ENCODE measurements at regions of chr5 and their contacts with region 1.

Region 1: GRCh38 chr5:149618581-149619251 is 37.4 kb downstream of the ARHGEF37 start:
- DNase-seq: peak; percentile 76

Region 2: GRCh38 chr5:149448831-149449714 is 169.6 kb before region 1 on chr5:
- CTCF ChIA-PET with region 1: interaction called, 10 read pairs
- POLR2A ChIA-PET with region 1: no interaction called
- DNase-seq: no peak

Region 3: DNA sequence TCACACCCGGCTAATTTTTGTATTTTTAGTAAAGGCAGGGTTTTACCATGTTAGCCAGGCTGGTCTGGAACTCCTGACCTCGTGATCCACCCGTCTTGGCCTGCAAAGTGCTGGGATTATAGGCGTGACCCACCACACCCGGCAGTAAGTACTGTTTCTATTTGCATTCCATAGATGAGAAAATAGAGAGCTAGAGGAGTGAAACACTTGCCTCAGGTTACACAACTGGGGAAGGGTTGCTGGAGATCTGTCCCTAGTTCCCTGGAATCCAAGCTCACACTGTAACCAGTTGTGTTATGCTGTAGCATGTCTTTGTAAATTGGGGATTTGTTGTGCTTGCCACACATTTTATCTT is 10.2 kb before region 1 on chr5:
- CTCF ChIA-PET with region 1: interaction called, 13 read pairs
- POLR2A ChIA-PET with region 1: interaction called, 4 read pairs
- DNase-seq: no peak